Common myeloid progenitor, CD34-positive (primary cell): ENCODE measurements at regions of chr15 and their contacts with region 1.

Region 1: DNA sequence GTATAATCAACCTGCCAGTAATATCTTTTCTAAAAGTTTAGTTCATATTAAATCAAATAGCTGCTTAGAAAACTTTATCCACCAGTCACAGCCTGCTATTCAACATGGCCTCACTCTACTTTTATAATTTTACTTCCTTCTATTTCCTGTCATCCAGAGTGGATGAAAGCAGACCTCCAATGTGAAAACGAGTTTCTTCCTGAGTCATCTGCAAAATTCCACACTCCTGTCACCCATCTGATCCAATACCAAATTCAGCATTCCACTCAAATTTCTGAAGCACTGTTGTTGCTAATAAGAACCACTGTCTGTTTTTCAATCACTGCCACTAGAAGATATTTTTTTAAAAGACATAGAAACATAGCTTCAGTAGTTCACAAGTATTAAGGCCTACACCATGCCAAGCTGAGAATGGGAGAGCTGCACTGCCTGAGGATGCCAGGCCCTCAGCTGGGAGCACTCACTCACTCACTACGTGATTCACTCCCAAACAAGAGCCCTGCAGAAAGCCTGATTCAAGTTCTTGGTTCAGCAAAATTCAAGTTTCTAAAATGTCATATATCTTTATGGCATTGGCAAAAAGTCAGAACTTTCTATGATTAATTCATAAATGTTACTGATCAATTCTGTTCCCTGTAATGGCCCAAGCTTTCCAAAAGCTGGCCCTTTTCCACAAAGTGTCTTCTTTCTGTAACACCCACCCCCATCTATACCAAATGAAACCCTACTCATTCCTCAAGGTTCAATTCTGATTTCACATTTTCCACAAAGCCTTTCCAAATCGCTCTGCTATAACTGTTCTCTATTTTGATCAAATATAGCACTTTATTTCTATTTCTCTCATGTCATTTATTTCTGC is 82.9 kb downstream of the FSIP1 start:
- DNase-seq: no peak
- H3K4me3 ChIP-seq: no peak overlapping the region
- H3K27ac ChIP-seq: peak overlapping the region in 1 of 2 experiments; percentile 5
- H3K4me1 ChIP-seq: peaks cover 0 to 3% (median 0%) of the 10 kb centered on the region in 4 experiments
- H3K27me3 ChIP-seq: no peaks in the 10 kb centered on the region

Region 2: GRCh38 chr15:39686000-39686613 is 13.6 kb before region 1 on chr15:
- CTCF ChIA-PET with region 1: interaction called, 11 read pairs
- POLR2A ChIA-PET with region 1: no interaction called
- DNase-seq: peak; percentile 57 to 74 (median 67)
- H3K4me3 ChIP-seq: no peak overlapping the region
- H3K27ac ChIP-seq: no peak overlapping the region
- H3K4me1 ChIP-seq: no peaks in the 10 kb centered on the region
- H3K27me3 ChIP-seq: peaks cover 0 to 1% (median 0%) of the 10 kb centered on the region in 5 experiments

Region 3: DNA sequence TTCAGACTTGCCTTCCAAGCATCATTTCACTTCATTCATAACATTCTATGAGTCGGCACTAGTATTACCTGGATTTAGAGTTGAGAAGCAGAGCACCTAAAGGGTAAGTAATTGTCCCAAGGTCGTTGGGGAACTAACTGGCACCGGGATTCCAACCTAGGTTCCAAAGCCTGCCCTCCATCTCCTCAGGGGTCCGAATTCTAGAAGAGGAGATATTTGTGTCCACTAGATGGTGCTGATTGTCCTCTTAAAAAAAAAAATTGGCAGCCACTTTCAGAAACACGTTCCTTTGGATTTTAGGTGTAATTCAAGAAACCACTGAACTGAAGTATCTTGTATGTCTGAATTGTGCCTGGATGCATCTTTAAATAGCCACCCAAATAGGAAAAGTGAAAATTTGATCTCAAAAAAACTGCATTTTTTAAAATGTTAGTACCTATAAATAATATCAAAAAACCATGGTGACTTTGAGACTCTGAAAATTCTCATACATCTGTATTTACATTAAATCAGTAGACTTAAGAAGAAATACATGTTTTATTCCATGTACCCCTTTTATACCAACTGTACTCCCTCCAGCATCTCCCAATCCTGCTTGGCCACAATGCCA is 86.8 kb after region 1 on chr15:
- CTCF ChIA-PET with region 1: no interaction called
- POLR2A ChIA-PET with region 1: no interaction called
- DNase-seq: peak; percentile 66 to 75 (median 71)
- H3K4me3 ChIP-seq: no peak overlapping the region
- H3K27ac ChIP-seq: no peak overlapping the region
- H3K4me1 ChIP-seq: peaks cover 13 to 49% (median 27%) of the 10 kb centered on the region in 4 experiments
- H3K27me3 ChIP-seq: no peaks in the 10 kb centered on the region

Region 4: DNA sequence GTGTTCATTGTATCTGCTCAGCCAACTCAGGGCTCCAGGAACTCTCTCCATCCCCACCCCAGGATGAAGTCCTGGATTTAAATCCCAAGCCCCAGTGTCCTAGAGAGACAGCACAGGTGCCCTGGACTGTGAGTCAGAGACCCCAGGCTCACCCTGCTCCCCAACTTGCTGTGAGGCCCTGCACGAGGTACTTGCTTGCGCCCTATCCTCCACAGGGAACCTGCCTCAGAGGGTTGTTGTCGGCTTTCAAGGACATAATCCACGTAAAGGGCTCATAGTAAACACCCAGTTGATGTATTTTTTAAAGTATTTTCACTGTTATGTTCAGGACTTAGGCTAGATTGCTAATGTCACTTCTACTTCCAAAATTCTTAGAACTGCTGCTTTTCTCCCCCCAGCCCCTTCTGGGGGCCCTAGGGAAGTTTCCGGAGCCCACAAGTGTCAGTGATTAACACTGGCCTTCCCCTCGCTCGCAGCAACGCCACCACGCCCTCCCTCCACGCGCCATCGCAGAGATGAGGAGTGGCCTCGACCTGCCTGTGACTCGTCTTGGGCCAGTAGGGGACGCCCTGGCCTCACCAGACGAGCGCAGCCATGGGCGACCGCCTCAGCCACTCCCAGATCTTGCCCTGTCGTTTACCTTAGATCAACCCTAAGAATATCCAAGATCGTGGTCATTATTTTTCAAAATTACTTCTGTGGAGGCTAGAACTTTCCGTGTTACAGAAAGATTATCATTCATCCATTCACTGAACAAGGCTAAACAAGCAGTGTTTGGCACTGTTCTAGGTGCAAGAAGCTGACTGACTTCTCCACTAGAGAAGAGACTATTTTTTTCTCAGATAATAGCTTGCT is 345.2 kb after region 1 on chr15:
- CTCF ChIA-PET with region 1: no interaction called
- POLR2A ChIA-PET with region 1: no interaction called
- DNase-seq: peak; percentile 84 to 88 (median 84)
- H3K4me3 ChIP-seq: peak overlapping the region in 4 of 7 experiments; percentile 37 to 65 (median 46)
- H3K27ac ChIP-seq: peak overlapping the region in 1 of 2 experiments; percentile 59
- H3K4me1 ChIP-seq: peaks cover 13 to 62% (median 55%) of the 10 kb centered on the region in 4 experiments
- H3K27me3 ChIP-seq: no peaks in the 10 kb centered on the region